Calu3 (cell line): ENCODE measurements at regions of chr1 and their contacts with region 1.

Region 1: DNA sequence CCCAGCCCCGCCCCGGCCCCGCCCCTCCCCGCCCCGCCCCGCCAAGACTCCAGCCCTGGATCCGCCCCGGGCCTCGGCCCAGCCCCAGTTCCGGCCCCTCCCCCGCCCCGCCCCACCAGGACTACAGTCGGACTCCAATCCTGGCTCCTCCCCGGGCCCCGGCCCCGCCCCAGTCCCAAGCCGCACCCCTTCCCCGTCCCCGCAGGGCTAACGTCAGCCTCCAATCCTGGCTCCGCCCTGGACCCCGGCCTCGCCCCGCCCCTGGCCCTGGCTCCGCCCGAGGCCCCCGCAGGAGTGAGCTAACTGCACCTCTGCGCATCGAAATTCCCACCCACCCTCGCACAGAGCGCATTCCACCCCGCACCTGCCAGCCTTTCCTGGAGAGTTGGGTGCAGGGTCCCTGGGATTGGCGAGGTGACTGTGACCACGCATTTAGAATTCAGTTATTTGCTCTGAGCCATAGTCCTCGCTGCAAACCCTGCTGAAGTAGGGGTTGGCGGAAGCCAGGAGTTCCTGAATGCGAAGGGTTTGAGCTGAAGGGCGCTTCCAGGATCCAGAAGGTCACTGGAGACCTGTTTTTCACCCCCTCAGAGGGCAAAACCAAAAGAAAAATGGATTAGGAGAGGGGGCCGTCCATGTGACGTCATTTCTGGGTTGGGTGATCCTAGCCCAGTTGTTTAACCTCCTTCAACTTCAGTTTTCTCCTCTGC is 588 bp upstream of the IGSF8 start:
- DNase-seq: peak; percentile 98
- H3K4me3 Mint-ChIP-seq: peak overlapping the region; percentile 86
- H3K27ac Mint-ChIP-seq: peak overlapping the region; percentile 76
- H3K4me1 Mint-ChIP-seq: peaks cover 38% of the 10 kb centered on the region
- H3K27me3 Mint-ChIP-seq: peaks cover 13% of the 10 kb centered on the region
- CTCF ChIP-seq: no peak

Region 2: DNA sequence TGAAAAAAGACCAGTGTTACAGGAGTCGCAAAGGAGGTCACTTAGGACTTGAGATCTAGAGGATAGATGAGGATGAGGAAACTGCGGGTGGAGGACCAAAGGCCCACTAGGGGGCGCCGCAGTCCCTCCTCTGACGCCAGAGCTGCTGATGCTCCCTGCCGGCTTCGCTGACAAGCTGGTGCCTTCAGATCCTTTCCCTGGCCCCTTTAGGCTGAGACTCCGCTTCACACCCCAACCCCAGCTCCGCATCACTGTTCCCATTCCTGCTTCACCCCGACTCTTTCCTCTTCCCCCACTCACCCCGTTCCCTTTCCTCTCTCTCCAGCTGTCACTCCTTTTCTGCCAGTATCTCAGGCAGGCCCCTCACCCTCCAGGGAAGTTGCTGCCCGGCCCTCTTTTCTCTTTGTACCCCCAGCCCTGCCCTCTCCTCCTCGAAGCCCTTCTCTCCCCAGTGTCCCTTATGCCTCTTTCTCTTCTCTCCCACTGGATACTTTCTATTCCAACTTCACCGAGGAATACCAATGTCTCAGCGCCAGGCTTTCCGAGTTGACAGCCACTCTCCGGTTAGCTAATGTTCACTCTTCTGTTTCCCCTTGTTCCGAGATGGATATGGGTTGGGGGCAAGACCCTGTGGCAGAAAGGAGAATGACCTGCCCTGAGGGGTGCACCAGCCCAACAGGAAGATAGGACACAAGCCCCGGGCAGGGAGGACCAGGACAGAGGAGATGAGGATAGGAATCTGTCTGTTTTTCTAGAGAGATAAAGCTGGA is 13.1 kb before region 1 on chr1:
- CTCF ChIA-PET with region 1: interaction called, 10 read pairs
- intact Hi-C with region 1: no loop called
- DNase-seq: peak; percentile 84
- H3K4me3 Mint-ChIP-seq: no peak overlapping the region
- H3K27ac Mint-ChIP-seq: no peak overlapping the region
- H3K4me1 Mint-ChIP-seq: peaks cover 4% of the 10 kb centered on the region
- H3K27me3 Mint-ChIP-seq: peaks cover 26% of the 10 kb centered on the region
- CTCF ChIP-seq: peak; percentile 83

Region 3: GRCh38 chr1:160117709-160118183 is 18.7 kb after region 1 on chr1:
- CTCF ChIA-PET with region 1: no interaction called
- intact Hi-C with region 1: no loop called
- DNase-seq: no peak
- H3K4me3 Mint-ChIP-seq: no peak overlapping the region
- H3K27ac Mint-ChIP-seq: no peak overlapping the region
- H3K4me1 Mint-ChIP-seq: no peaks in the 10 kb centered on the region
- H3K27me3 Mint-ChIP-seq: peaks cover 76% of the 10 kb centered on the region
- CTCF ChIP-seq: no peak

Region 4: GRCh38 chr1:160251687-160252526 is 152.9 kb after region 1 on chr1:
- CTCF ChIA-PET with region 1: interaction called, 36 read pairs
- intact Hi-C with region 1: loop called (anchors 1 kb)
- DNase-seq: peak; percentile 61
- H3K4me3 Mint-ChIP-seq: no peak overlapping the region
- H3K27ac Mint-ChIP-seq: no peak overlapping the region
- H3K4me1 Mint-ChIP-seq: peaks cover 7% of the 10 kb centered on the region
- H3K27me3 Mint-ChIP-seq: no peaks in the 10 kb centered on the region
- CTCF ChIP-seq: peak; percentile 70

Region 5: GRCh38 chr1:160376525-160377131 is 277.6 kb after region 1 on chr1:
- CTCF ChIA-PET with region 1: interaction called, 10 read pairs
- intact Hi-C with region 1: loop called (anchors 1 kb)
- DNase-seq: peak; percentile 55
- H3K4me3 Mint-ChIP-seq: no peak overlapping the region
- H3K27ac Mint-ChIP-seq: no peak overlapping the region
- H3K4me1 Mint-ChIP-seq: peaks cover 17% of the 10 kb centered on the region
- H3K27me3 Mint-ChIP-seq: peaks cover 24% of the 10 kb centered on the region
- CTCF ChIP-seq: peak; percentile 79